Left ventricle myocardium inferior (tissue), 1 donor: ENCODE measurements at regions of chr3 and their contacts with region 1.

Region 1: GRCh38 chr3:56702490-56703315 is 19.6 kb upstream of the TASOR start:
- DNase-seq: no peak
- H3K4me3 ChIP-seq: no peak overlapping the region
- H3K27ac ChIP-seq: no peak overlapping the region
- H3K4me1 ChIP-seq: peaks cover 3% of the 10 kb centered on the region
- H3K27me3 ChIP-seq: no peaks in the 10 kb centered on the region
- CTCF ChIP-seq: peak; percentile 92

Region 2: DNA sequence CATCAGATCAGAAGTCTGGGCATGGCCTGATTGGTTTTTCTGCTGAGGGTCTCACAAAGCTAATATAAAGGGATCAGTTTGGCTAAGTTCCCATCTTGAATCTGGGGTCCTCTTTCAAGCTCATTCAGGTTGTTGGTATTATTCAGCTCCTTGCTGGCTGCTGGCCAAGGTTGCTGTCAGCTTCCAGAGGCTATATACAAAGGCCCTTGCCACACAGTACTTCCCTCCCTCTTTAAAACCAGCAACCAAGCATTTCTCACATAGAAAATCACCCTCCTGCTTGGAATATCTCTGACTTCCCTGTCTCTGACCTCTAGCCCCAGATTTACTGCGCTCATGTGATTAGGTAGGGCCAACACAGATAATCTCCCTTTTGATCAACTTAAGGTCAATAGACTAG is 677.4 kb before region 1 on chr3:
- intact Hi-C with region 1: no loop called
- DNase-seq: no peak
- H3K4me3 ChIP-seq: no peak overlapping the region
- H3K27ac ChIP-seq: no peak overlapping the region
- H3K4me1 ChIP-seq: no peaks in the 10 kb centered on the region
- H3K27me3 ChIP-seq: peaks cover 73% of the 10 kb centered on the region
- CTCF ChIP-seq: no peak

Region 3: DNA sequence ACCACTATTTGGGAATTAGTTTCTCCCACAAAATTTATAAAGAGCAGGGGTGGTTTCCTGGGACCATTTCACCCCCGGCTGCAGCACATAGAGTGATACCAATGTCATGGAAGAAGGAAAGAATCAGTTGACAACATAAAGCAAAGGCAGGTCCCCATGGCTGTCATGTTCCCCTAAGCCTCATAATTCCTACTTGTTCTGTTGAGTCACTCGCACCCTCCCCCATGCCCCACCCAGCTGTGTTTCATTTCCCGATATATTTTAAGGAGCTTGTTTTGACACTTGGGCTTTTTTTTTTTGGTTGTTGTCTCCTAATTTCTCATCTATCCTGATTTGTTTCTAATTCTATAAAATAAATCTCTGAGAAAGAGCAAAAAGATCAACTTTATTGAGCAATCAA is 259.3 kb before region 1 on chr3:
- intact Hi-C with region 1: no loop called
- DNase-seq: no peak
- H3K4me3 ChIP-seq: no peak overlapping the region
- H3K27ac ChIP-seq: no peak overlapping the region
- H3K4me1 ChIP-seq: no peaks in the 10 kb centered on the region
- H3K27me3 ChIP-seq: peaks cover 16% of the 10 kb centered on the region
- CTCF ChIP-seq: no peak

Region 4: GRCh38 chr3:56645407-56645806 is 57.3 kb before region 1 on chr3:
- intact Hi-C with region 1: no loop called
- DNase-seq: no peak
- H3K4me3 ChIP-seq: no peak overlapping the region
- H3K27ac ChIP-seq: no peak overlapping the region
- H3K4me1 ChIP-seq: peaks cover 27% of the 10 kb centered on the region
- H3K27me3 ChIP-seq: no peaks in the 10 kb centered on the region
- CTCF ChIP-seq: no peak

Region 5: DNA sequence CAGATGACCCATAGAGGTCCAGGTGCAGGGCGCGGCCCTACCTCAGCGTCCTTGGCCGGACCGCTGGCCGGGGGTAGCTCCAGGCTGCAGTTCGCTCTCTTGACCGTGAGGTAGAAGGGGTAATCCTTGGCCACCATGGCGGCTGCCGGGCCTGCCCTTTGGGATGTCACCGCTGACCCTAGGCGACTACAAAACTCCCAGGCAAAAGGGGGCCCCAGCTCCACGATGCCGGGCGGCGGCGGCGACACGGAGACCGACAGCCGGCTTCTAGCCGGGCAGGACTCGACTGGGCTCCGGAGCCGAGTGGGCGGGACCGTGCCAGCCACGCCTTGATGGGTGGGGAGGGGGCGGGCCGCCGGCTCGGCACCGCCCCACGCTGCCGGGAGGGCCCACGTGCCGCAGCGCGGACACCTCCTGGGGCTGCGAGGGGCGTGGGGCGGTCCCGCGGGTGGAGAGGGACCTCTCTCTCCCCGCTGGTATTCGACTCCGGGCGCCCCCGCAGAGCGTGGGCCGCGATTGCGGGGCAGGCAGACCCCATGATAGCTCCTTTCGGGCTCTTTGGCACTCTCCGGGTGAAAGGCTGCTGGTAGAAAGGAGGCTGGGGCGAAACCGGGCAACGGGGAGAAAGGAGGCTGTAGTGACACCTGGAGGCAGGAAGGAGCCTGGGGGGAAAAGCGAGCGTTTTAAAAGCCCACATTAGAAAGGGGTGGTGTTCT is 99.1 kb after region 1 on chr3 and contains the start of gene ARHGEF3:
- intact Hi-C with region 1: loop called (anchors 5 kb)
- DNase-seq: peak; percentile 88
- H3K4me3 ChIP-seq: peak within 1 kb of the TSS; percentile 88
- H3K27ac ChIP-seq: peak within 1 kb of the TSS; percentile 84
- H3K4me1 ChIP-seq: peaks cover 55% of the 10 kb centered on the region
- H3K27me3 ChIP-seq: no peaks in the 10 kb centered on the region
- CTCF ChIP-seq: peak; percentile 56
- total RNA-seq, gene ARHGEF3: 16.5 TPM